B cell (primary cell): ENCODE measurements at regions of chr21 and their contacts with region 1.

Region 1: GRCh38 chr21:14737922-14738321 is 191.8 kb upstream of the SAMSN1 start:
- DNase-seq: peak; percentile 80
- ATAC-seq: peak; percentile 81
- H3K4me3 ChIP-seq: no peak overlapping the region
- H3K4me3 Mint-ChIP-seq: no peak overlapping the region
- H3K27ac ChIP-seq: no peak overlapping the region
- H3K27ac Mint-ChIP-seq: no peak overlapping the region
- H3K4me1 ChIP-seq: peaks cover 6 to 16% of the 10 kb centered on the region in 2 donors
- H3K4me1 Mint-ChIP-seq: peaks cover 28% of the 10 kb centered on the region
- H3K27me3 ChIP-seq: no peaks in the 10 kb centered on the region
- H3K27me3 Mint-ChIP-seq: no peaks in the 10 kb centered on the region
- CTCF ChIP-seq: peak; percentile 89

Region 2: DNA sequence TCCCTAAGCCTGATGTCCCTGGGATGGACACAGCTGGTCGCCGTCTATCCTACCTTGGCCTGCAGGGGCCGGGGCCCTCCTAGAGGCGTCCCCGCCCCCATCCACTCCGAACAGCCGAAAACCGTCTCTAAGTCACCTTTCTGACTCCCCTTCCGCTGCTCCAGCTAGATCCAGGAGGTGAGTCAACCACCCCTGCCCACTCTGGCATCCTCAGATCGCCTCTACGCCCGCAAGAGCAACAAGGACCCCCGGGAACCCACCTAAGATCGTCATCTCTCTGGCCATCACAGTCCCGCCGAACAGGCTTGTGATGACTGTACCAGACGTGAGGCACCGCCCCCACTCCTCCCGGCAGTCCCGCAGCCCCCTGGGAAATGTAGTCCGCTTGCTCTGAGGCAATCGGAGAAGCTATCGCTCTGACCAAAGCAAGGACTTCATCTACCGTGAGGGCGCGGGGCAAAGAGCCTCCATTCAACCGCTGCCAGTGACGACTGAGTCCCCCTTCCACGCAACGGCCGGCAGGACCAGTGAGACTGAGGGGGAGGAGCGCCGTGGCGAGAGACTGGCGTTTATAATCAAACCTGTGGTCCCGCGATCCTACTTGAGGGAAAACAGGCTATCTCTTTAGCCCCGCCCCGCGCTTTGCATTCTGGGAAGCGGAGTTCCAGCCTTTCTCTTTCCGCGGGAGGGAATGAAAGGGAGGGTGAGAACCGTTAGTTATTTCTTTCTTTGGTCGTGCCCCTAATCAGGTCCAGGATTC is 354.9 kb before region 1 on chr21 and contains the start of gene HSPA13:
- CTCF ChIA-PET with region 1: interaction called, 11 read pairs
- POLR2A ChIA-PET with region 1: no interaction called
- intact Hi-C with region 1: loop called (anchors 5 kb)
- DNase-seq: peak; percentile 100
- ATAC-seq: peak; percentile 93
- H3K4me3 ChIP-seq: peak within 1 kb of the TSS; percentile 85 to 95 (median 88)
- H3K4me3 Mint-ChIP-seq: peak within 1 kb of the TSS; percentile 100
- H3K27ac ChIP-seq: peak within 1 kb of the TSS; percentile 91 to 96
- H3K27ac Mint-ChIP-seq: peak within 1 kb of the TSS; percentile 98
- H3K4me1 ChIP-seq: peaks cover 10 to 11% of the 10 kb centered on the region in 2 donors
- H3K4me1 Mint-ChIP-seq: peaks cover 37% of the 10 kb centered on the region
- H3K27me3 ChIP-seq: no peaks in the 10 kb centered on the region
- H3K27me3 Mint-ChIP-seq: no peaks in the 10 kb centered on the region
- CTCF ChIP-seq: no peak
- total RNA-seq, gene HSPA13: 19.1 and 19.3 TPM in 2 replicates

Region 3: GRCh38 chr21:14479241-14479786 is 258.6 kb before region 1 on chr21:
- CTCF ChIA-PET with region 1: interaction called, 4 read pairs
- POLR2A ChIA-PET with region 1: no interaction called
- intact Hi-C with region 1: loop called (anchors 5 kb)
- DNase-seq: no peak
- ATAC-seq: no peak
- H3K4me3 ChIP-seq: no peak overlapping the region
- H3K4me3 Mint-ChIP-seq: no peak overlapping the region
- H3K27ac ChIP-seq: no peak overlapping the region
- H3K27ac Mint-ChIP-seq: no peak overlapping the region
- H3K4me1 ChIP-seq: peaks cover 9% of the 10 kb centered on the region in 2 donors
- H3K4me1 Mint-ChIP-seq: peaks cover 23% of the 10 kb centered on the region
- H3K27me3 ChIP-seq: no peaks in the 10 kb centered on the region
- H3K27me3 Mint-ChIP-seq: no peaks in the 10 kb centered on the region
- CTCF ChIP-seq: no peak

Region 4: DNA sequence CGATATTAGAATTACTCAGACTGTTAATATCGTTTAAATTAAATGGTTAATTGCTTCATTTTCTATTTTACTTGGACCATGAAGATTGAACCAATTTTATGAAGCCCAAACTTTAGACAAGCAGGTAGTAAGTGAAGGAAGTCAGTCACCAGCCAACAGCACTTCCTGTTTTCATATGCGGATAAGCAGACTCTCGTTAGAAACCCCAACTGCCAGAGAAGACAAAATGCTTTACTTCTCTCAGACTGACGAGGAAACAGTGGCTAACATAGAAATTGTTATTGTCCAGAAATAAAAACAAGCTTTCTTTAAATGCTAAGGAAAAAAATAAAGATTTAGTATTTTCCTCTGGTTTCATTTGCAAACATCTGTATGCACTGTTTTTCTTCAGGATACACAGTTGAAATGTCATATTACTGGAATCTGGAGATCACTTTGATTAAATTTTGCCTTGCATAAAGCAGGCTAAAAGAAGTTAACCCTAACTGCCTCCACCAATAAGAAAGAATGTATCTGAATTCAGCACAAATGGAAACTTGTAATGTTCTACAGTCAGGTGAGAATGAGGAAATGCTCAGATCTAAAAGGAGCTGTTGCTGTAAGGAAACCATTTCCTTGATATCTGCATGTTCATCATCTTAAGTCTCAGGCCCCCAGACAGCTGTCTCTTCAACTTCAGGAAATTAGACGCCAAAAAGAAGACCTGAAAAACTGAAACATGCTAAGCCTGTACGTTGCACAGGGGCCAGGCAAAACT is 62.0 kb before region 1 on chr21:
- CTCF ChIA-PET with region 1: interaction called, 7 read pairs
- POLR2A ChIA-PET with region 1: no interaction called
- intact Hi-C with region 1: loop called (anchors 5 kb)
- DNase-seq: peak; percentile 67
- ATAC-seq: peak; percentile 80
- H3K4me3 ChIP-seq: peak overlapping the region in 3 of 5 experiments; percentile 10 to 47 (median 24)
- H3K4me3 Mint-ChIP-seq: peak overlapping the region; percentile 57
- H3K27ac ChIP-seq: peak overlapping the region; percentile 74 to 85
- H3K27ac Mint-ChIP-seq: peak overlapping the region; percentile 91
- H3K4me1 ChIP-seq: peaks cover 44 to 46% of the 10 kb centered on the region in 2 donors
- H3K4me1 Mint-ChIP-seq: peaks cover 59% of the 10 kb centered on the region
- H3K27me3 ChIP-seq: no peaks in the 10 kb centered on the region
- H3K27me3 Mint-ChIP-seq: no peaks in the 10 kb centered on the region
- CTCF ChIP-seq: no peak

Region 5: DNA sequence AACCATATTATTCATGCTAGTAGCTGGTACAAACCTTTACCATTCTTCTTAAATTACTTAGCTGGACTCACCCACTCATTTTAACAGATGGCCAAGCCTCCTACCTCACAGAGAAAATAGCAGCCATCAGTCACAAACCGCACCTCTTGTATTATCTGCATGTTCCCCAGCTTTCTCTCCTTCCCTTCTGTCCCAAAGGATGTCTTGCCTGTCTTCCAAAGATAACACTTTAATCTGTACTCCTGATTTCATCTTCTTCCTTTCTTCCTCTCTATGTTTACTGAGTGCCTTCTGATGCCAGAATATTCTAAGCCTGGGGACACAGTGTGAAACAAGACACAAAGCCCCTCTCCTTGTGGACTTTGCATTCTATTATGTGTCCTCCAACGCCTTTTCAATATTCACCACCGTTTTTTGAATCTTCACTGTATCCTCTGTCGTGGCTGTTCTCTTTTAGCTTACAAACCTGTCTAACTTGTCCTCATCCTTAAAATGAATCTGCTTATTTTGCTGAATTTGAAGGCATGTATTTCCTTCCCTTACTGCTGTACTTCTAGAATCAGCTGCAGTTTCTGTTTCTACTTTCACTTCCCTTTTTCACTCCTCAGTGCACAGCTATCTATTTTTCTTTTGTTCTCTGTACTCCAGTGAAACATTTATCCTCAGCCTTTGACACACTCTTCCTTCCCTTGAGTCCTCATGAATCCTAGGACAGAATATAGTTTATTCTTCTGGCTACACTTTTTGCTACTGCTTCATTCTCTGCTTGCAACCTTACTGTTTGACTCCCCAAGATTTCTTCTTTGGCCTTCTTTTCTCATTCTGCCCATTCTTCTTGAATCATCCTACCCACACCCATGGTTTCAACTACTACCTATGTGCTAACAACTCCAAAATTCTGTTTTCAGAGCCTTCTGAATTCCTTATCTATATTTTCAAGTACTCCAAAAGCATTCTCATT is 25.1 kb after region 1 on chr21:
- CTCF ChIA-PET with region 1: interaction called, 21 read pairs
- POLR2A ChIA-PET with region 1: no interaction called
- intact Hi-C with region 1: loop called (anchors 1 kb)
- DNase-seq: peak; percentile 83
- ATAC-seq: peak; percentile 93
- H3K4me3 ChIP-seq: peak overlapping the region; percentile 24 to 72 (median 48)
- H3K4me3 Mint-ChIP-seq: no peak overlapping the region
- H3K27ac ChIP-seq: peak overlapping the region; percentile 69 to 87
- H3K27ac Mint-ChIP-seq: no peak overlapping the region
- H3K4me1 ChIP-seq: peaks cover 27 to 36% of the 10 kb centered on the region in 2 donors
- H3K4me1 Mint-ChIP-seq: peaks cover 36% of the 10 kb centered on the region
- H3K27me3 ChIP-seq: no peaks in the 10 kb centered on the region
- H3K27me3 Mint-ChIP-seq: no peaks in the 10 kb centered on the region
- CTCF ChIP-seq: no peak

Region 6: DNA sequence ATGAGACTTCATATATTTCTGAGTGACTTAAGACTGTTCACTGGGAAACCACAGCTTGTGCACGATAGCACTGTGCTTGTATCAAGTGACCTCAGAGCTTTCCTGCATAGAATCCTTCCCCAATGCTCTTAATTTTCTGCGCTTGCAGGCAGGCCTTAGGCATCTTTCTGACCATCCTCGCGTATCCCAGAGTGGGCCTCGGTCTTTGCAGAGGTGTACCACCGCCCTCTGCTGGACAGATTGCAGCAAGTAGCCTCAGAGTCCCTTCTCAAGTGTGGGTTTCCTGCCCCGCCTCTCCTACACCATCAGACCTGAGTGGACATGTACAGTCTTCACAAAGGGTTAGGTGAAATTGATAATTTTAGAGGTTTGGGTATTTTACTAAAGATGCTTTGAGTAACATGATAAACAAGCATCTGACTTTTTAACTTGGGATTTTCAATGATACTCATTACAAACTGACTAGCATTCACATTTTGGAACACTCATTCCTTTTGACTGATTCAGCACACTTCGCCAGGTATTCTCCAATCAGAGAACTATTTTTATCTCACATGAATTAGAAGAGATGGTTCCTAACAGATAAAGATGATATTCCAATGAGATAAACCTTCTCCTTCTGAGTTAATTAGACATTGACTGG is 745.3 kb after region 1 on chr21:
- CTCF ChIA-PET with region 1: interaction called, 5 read pairs
- POLR2A ChIA-PET with region 1: no interaction called
- intact Hi-C with region 1: loop called (anchors 2 kb)
- DNase-seq: peak; percentile 83
- ATAC-seq: peak; percentile 99
- H3K4me3 ChIP-seq: no peak overlapping the region
- H3K4me3 Mint-ChIP-seq: no peak overlapping the region
- H3K27ac ChIP-seq: no peak overlapping the region
- H3K27ac Mint-ChIP-seq: no peak overlapping the region
- H3K4me1 ChIP-seq: peaks cover 0 to 3% of the 10 kb centered on the region in 2 donors
- H3K4me1 Mint-ChIP-seq: peaks cover 2% of the 10 kb centered on the region
- H3K27me3 ChIP-seq: no peaks in the 10 kb centered on the region
- H3K27me3 Mint-ChIP-seq: peaks cover 4% of the 10 kb centered on the region
- CTCF ChIP-seq: peak; percentile 93